ENCODE measurements at regions of chr15 and their contacts with region 1.

Region 1: DNA sequence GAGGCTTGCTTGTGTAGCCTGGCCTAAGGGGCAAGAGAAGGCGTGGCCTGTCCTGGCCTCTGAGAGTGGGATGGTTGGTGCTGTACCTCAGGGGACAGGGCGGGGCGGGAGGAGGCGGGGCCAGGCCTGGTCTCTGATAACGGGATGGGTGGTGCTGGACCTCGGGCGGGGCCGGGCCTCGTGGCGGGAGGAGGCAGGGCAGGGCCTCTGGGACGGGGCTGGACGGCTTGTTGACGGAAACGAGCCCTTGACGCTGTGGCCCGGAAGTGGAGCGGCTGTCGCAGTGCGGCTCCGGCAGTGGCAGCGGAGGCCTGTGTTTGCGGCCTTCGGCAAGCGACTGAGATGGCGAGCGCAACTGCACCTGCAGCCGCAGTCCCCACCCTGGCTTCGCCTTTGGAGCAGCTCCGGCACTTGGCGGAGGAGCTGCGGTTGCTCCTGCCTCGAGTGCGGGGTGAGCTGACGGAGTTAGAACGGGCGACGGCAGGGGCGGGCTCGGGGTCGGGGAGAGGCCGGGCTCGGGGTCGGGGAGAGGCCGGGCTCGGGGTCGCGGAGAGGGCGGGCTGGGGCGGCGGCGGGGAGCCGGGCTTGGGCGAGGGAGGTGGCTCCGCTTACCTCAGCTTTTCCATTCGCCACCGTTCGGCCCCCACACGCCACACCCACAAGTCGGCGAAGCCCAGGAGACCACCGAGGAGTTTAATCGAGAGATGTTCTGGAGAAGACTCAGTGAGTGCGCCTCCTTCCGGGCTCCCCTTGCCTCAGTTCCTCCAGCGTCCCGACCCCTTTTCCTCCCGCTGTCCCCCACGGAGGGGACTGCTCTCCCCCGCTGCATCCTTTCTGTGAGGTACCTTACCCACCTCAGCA is at the start of gene CCNDBP1:
- DNase-seq: peak; percentile 94
- H3K4me3 ChIP-seq: peak within 1 kb of the TSS; percentile 47 to 83 (median 68)
- H3K27ac ChIP-seq: peak within 1 kb of the TSS; percentile 82 to 88 (median 87)
- H3K4me1 ChIP-seq: peaks cover 0 to 35% (median 27%) of the 10 kb centered on the region in 4 donors
- H3K27me3 ChIP-seq: no peaks in the 10 kb centered on the region
- CTCF ChIP-seq: peak in 3 of 4 experiments; percentile 6 to 33 (median 19)
- EP300 ChIP-seq: no peak
- POLR2A ChIP-seq: peak; percentile 40 to 55
- total RNA-seq, gene CCNDBP1: 39.1 to 80.5 (median 49.8) TPM

Region 2: GRCh38 chr15:43093026-43093425 is 92.4 kb before region 1 on chr15:
- intact Hi-C with region 1: no loop called
- DNase-seq: no peak
- H3K4me3 ChIP-seq: no peak overlapping the region
- H3K27ac ChIP-seq: peak overlapping the region in 2 of 4 donors; percentile 9 to 43
- H3K4me1 ChIP-seq: peaks cover 0 to 23% (median 15%) of the 10 kb centered on the region in 4 donors
- H3K27me3 ChIP-seq: no peaks in the 10 kb centered on the region
- CTCF ChIP-seq: no peak
- EP300 ChIP-seq: no peak
- POLR2A ChIP-seq: no peak

Region 3: GRCh38 chr15:43105778-43106485 is 79.5 kb before region 1 on chr15 and contains the start of gene UBR1:
- intact Hi-C with region 1: loop called (anchors 10 kb)
- DNase-seq: peak; percentile 96
- H3K4me3 ChIP-seq: peak within 1 kb of the TSS; percentile 65 to 86 (median 72)
- H3K27ac ChIP-seq: peak within 1 kb of the TSS; percentile 86 to 88 (median 86)
- H3K4me1 ChIP-seq: peaks cover 0 to 32% (median 19%) of the 10 kb centered on the region in 4 donors
- H3K27me3 ChIP-seq: no peaks in the 10 kb centered on the region
- CTCF ChIP-seq: no peak
- EP300 ChIP-seq: peak in 2 of 4 donors; percentile 27 to 46
- POLR2A ChIP-seq: peak; percentile 38 to 45
- total RNA-seq, gene UBR1: 35.3 to 44.7 (median 41.9) TPM

Region 4: DNA sequence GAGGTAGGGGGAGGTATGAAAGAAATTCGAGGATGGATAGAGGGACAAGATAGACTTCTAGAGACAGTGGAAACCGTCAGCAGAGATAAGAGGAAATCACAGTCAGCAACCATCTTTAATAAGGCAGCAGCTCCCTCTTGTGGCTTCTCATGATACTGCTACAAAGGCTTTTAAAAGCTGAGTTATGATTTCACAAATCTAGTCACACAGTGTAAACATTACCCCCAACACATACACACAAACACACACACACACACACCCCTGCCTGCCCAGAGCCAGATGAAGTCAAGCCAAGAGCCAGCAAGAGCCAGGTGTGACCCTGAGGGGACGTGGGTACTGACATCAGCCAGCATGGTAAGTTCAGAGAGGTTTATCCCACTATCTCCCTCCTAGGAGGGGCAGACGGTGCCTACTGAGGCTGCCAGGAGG is 100.2 kb after region 1 on chr15:
- intact Hi-C with region 1: loop called (anchors 2 kb)
- DNase-seq: no peak
- H3K4me3 ChIP-seq: no peak overlapping the region
- H3K27ac ChIP-seq: no peak overlapping the region
- H3K4me1 ChIP-seq: no peaks in the 10 kb centered on the region
- H3K27me3 ChIP-seq: no peaks in the 10 kb centered on the region
- CTCF ChIP-seq: peak; percentile 70 to 91 (median 85)
- EP300 ChIP-seq: no peak
- POLR2A ChIP-seq: no peak

Measured in sigmoid colon (tissue), 7 donors.